ENCODE measurements at regions of chr1 and their contacts with region 1.

Region 1: DNA sequence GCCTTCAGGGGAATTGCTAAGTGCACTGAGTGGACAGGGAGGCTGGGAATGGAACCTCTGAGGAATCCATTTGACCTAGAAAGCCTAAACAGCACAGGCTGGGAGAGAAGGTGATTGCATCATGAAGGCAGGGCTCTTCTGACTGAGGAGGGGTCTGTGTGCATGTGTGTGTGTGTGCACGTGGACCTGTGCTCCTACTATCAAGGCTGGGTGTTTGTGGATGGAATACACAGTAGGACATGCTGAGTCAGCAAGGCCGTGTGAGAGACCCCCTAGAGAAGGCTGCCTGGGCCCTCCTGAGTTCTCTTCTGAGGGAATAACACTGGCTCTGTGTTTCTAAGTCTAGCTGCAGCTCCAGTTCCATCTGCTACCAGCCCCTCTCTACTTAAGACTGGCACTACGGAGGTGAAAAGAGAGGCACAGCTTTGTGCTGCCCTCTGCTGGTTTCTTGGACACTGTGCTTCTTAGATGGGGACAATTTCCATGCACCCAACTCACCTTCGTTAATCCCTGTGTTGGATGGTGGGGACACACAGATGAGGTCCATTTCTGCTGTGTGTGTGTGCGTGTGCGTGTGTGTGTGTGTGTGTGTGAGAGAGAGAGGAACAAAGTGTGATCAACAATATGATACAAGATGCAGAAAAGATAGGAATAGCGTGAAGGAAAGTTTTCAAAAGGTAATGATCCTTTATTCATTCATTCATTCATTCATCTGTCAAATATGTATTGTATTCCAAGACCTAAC is 6.2 kb upstream of the EFCAB14 start:
- DNase-seq: no peak
- H3K4me3 ChIP-seq: no peak overlapping the region
- H3K27ac ChIP-seq: no peak overlapping the region
- H3K4me1 ChIP-seq: peaks cover 0 to 28% (median 3%) of the 10 kb centered on the region in 3 donors
- H3K27me3 ChIP-seq: peaks cover 0 to 32% (median 0%) of the 10 kb centered on the region in 4 donors
- CTCF ChIP-seq: peak; percentile 58 to 87 (median 83)
- POLR2A ChIP-seq: no peak

Region 2: GRCh38 chr1:46527474-46528296 is 197.5 kb before region 1 on chr1:
- intact Hi-C with region 1: loop called (anchors 10 kb)
- DNase-seq: peak; percentile 15
- H3K4me3 ChIP-seq: no peak overlapping the region
- H3K27ac ChIP-seq: no peak overlapping the region
- H3K4me1 ChIP-seq: peaks cover 11 to 46% (median 11%) of the 10 kb centered on the region in 3 donors
- H3K27me3 ChIP-seq: peaks cover 0 to 81% (median 0%) of the 10 kb centered on the region in 4 donors
- CTCF ChIP-seq: peak; percentile 65 to 96 (median 94)
- POLR2A ChIP-seq: no peak

Region 3: GRCh38 chr1:46622344-46622743 is 102.8 kb before region 1 on chr1:
- intact Hi-C with region 1: loop called (anchors 5 kb)
- DNase-seq: no peak
- H3K4me3 ChIP-seq: no peak overlapping the region
- H3K27ac ChIP-seq: peak overlapping the region in 1 of 4 donors; percentile 29
- H3K4me1 ChIP-seq: peaks cover under 1 to 19% (median 1%) of the 10 kb centered on the region in 3 donors
- H3K27me3 ChIP-seq: no peaks in the 10 kb centered on the region
- CTCF ChIP-seq: peak in 5 of 6 experiments; percentile 42 to 65 (median 44)
- POLR2A ChIP-seq: no peak

Region 4: DNA sequence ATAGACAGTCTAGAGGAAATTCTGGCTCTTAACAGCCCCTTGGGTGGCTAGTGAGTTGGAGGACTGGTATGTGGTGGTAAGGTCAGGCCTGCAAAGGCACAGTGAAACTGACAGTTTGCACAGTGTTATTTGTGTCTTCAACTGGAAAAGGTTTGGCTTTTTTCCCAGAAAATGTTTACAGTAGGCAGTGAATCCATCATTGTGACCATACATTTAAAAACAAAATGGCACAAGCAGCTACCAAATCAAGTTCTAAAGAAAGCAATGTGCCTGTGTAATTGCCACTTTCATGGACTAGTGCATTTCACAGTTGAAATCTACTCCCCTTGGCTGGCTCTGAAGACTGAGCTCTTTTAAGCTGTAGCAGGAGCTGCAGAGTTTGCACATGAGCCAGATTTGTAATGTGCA is 81.8 kb before region 1 on chr1:
- intact Hi-C with region 1: no loop called
- DNase-seq: no peak
- H3K4me3 ChIP-seq: no peak overlapping the region
- H3K27ac ChIP-seq: peak overlapping the region in 3 of 4 donors; percentile 17 to 49 (median 27)
- H3K4me1 ChIP-seq: peaks cover 0 to 39% (median 17%) of the 10 kb centered on the region in 3 donors
- H3K27me3 ChIP-seq: no peaks in the 10 kb centered on the region
- CTCF ChIP-seq: no peak
- POLR2A ChIP-seq: no peak

Region 5: DNA sequence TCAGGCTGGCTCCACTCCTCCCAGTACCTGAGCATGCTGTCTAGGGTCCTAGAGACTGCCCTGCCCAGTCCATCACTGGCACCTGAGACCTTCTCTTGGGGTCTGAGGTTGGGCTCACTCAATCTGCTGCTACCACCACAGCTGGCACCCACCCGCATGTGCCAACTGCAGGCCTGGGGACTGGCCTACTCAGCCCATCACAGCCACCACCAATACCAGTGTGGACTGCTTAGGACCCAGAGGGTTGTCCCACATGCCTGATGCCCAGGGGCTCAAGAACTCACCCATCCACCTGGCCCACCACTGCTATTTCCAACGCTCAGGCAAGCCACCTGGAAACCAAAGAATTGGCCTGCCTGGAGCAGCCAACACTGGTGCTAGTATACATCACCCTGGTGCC is 137.2 kb after region 1 on chr1:
- intact Hi-C with region 1: no loop called
- DNase-seq: no peak
- H3K4me3 ChIP-seq: no peak overlapping the region
- H3K27ac ChIP-seq: no peak overlapping the region
- H3K4me1 ChIP-seq: no peaks in the 10 kb centered on the region
- H3K27me3 ChIP-seq: no peaks in the 10 kb centered on the region
- CTCF ChIP-seq: no peak
- POLR2A ChIP-seq: no peak